WTC11 (cell line): ENCODE measurements at regions of chr14 and their contacts with region 1.

Region 1: DNA sequence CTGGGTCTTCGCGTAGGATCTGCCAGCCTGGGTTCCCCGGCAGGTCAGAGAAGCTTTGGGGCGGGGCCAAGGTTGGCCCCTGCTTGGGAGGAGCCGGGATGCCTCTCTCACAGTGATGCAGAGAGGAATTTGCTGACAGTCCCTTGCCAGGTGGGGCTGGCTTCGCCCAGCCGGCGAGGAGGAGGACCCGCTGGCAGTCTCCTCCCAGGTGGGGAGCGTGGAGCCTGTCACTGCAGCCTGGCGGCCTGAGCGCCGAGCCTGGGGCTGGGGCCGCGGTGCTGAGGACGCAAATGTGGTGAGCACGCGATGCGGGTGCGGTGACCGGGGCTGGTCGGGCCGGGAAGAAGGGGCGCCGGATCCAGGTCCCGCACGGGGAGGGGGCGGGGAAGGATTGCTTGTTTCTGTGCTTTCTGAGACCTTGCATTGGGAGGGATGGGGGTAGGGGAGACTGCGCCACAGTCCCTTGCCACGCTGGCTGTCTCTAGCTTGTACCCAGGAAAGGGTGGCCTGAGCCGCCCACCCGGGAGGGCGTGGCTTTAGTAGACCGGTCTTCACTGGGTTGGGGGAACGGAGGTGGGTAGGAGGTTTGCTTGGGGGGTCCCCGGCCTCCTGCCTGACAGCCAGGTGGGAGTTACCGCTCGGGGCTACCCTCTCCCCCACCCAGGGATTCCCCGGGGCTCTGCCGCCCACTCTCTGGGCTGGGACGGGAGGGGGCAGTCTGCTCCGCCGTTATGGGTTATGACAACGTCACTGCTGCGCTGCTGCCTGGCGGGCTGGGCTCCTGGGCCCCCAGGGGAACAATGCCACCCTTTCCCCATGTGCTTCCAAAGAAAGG is at the start of gene TMEM63C:
- DNase-seq: peak; percentile 98
- ATAC-seq: peak; percentile 97
- H3K4me3 Mint-ChIP-seq: peak within 1 kb of the TSS; percentile 74
- H3K27ac Mint-ChIP-seq: peak within 1 kb of the TSS; percentile 89
- H3K4me1 Mint-ChIP-seq: peaks cover 9% of the 10 kb centered on the region
- H3K27me3 Mint-ChIP-seq: peaks cover 9% of the 10 kb centered on the region
- CTCF ChIP-seq: no peak
- total RNA-seq, gene TMEM63C: 3.6 to 8.8 TPM (median 6.0 TPM) in 3 replicates

Region 2: GRCh38 chr14:77139540-77140358 is 42.1 kb before region 1 on chr14:
- CTCF ChIA-PET with region 1: interaction called, 13 read pairs
- POLR2A ChIA-PET with region 1: no interaction called
- DNase-seq: peak; percentile 90
- ATAC-seq: peak; percentile 58
- H3K4me3 Mint-ChIP-seq: peak overlapping the region; percentile 92
- H3K27ac Mint-ChIP-seq: peak overlapping the region; percentile 32; the same call in 1 of the 2 replicates
- H3K4me1 Mint-ChIP-seq: peaks cover 42% of the 10 kb centered on the region
- H3K27me3 Mint-ChIP-seq: peaks cover 4% of the 10 kb centered on the region; the same call in 1 of the 2 replicates
- CTCF ChIP-seq: peak; percentile 75

Region 3: DNA sequence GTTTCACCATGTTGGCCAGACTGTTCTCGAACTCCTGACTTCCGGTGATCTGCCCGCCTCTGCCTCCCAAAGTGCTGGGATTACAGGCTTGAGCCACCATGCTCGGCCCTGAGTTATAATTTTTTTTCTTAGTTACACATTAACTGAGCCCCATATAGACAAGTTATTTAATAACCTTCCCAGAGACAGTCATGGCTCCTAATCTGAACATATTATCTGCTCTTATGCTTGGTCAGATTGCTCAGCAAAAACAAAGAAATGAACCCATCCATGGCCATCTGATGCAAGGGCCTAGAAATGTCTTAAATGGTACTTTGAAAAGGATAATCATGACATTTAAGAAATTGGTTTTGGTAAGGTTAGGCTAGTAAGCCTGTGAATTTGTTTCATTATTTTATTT is 208.4 kb after region 1 on chr14:
- CTCF ChIA-PET with region 1: no interaction called
- POLR2A ChIA-PET with region 1: no interaction called
- DNase-seq: no peak
- ATAC-seq: no peak
- H3K4me3 Mint-ChIP-seq: no peak overlapping the region
- H3K27ac Mint-ChIP-seq: no peak overlapping the region
- H3K4me1 Mint-ChIP-seq: no peaks in the 10 kb centered on the region
- H3K27me3 Mint-ChIP-seq: no peaks in the 10 kb centered on the region
- CTCF ChIP-seq: no peak